ENCODE measurements at regions of chr2 and their contacts with region 1.

Region 1: DNA sequence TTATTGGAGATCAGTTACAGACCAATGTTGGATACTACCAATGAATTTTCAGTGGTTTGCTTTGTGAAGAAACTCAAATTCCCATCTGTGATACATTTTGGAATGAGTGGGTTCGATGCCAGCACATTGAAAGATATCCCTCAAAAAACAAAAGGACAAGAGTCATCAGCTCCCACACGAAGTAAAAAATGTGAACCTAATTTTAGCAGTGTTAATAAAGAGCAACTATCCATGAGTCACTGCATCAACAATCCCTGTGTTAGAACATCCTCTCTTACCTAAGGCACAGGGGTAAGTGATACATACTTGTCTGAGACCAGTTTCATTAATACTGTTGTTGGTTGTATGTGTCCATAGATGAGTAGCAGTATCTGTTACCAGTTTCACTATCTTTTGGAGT is 551.8 kb upstream of the SOX11 start:
- DNase-seq: no peak
- H3K4me3 ChIP-seq: no peak overlapping the region
- H3K27ac ChIP-seq: no peak overlapping the region
- H3K4me1 ChIP-seq: no peaks in the 10 kb centered on the region
- CTCF ChIP-seq: no peak

Region 2: DNA sequence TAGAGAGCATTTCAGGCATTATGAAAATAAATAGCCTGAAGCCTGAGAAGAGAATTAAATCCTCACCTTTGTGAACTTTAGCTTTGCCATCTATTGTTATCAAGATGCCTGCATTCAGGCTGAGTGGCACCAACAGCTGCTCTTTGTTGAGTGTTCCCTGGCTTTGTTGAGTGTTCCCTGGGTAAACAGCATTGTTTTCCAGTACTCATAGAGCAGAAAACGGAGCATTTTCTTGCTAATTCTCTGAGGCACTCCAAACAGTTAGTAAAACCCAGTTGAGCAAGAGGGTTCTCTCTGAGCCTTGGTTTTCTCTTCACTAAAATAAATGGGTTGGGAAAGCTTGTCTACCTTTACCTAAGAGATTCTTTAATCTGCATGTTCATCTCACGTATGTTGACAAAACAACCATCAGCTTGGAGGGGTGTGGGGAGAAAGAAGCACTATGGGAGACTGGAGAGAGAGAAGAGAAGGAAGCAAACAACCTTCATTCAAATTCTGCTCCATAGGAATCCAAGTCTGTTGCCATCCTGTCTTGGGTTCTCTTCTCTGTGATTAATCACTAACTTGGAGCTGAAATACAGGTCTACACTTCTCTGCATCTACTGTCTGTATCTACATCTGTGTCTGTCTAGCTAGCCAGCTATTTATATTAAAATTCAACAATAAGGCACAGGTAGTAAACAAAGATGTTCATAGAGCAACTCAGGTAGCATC is 15.2 kb before region 1 on chr2:
- CTCF ChIA-PET with region 1: no interaction called
- POLR2A ChIA-PET with region 1: no interaction called
- intact Hi-C with region 1: loop called (anchors 1 kb)
- DNase-seq: no peak
- H3K4me3 ChIP-seq: no peak overlapping the region
- H3K27ac ChIP-seq: no peak overlapping the region
- H3K4me1 ChIP-seq: no peaks in the 10 kb centered on the region
- CTCF ChIP-seq: no peak

Region 3: GRCh38 chr2:5250482-5250881 is 110.1 kb after region 1 on chr2:
- CTCF ChIA-PET with region 1: no interaction called
- POLR2A ChIA-PET with region 1: no interaction called
- intact Hi-C with region 1: no loop called
- DNase-seq: no peak
- H3K4me3 ChIP-seq: no peak overlapping the region
- H3K27ac ChIP-seq: no peak overlapping the region
- H3K4me1 ChIP-seq: no peaks in the 10 kb centered on the region
- CTCF ChIP-seq: no peak